Endothelial cell of umbilical vein (primary cell): ENCODE measurements at regions of chr3 and their contacts with region 1.

Region 1: DNA sequence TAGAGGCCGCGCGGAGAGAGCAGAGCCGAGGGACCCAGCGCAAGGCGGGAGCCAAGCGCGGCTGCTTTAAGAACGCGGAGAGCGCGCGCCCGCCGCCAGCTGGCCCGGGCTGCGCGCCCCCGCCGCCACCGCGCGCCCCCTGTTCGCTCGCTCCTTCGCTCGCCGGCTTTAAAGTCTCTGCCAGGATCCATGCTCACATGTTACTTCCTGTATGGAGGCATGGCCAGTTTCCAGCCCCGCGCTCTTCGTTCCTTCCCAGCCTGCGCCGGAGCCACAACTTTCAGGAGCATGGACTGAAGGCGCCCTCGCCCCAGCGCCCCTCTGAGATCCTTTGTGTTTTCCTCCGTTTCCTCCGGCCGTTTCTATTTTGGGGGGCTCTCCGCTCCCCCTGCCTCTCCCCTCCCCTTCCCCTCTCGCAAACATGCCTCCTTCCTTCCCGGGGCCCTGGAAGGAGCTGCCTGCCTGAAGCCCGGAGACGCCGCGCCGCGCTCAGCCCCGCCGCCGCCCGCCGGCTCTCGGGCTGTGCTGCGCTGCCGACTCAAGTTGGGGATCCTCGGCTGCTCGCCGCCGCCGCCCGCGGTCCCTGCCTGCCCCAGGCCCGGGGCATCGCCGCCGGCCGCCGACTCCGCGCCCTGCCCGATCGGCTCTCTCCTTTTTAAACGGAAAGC is at the start of gene PTPRG:
- DNase-seq: peak; percentile 95
- H3K4me3 ChIP-seq: peak within 1 kb of the TSS; percentile 64 to 93 (median 82)
- H3K27ac ChIP-seq: peak within 1 kb of the TSS; percentile 76
- H3K4me1 ChIP-seq: peaks cover 30% of the 10 kb centered on the region
- H3K27me3 ChIP-seq: no peaks in the 10 kb centered on the region
- CTCF ChIP-seq: no peak
- POLR2A ChIP-seq: peak; percentile 92
- total RNA-seq, gene PTPRG: 37.5 and 39.1 TPM in 2 replicates

Region 2: DNA sequence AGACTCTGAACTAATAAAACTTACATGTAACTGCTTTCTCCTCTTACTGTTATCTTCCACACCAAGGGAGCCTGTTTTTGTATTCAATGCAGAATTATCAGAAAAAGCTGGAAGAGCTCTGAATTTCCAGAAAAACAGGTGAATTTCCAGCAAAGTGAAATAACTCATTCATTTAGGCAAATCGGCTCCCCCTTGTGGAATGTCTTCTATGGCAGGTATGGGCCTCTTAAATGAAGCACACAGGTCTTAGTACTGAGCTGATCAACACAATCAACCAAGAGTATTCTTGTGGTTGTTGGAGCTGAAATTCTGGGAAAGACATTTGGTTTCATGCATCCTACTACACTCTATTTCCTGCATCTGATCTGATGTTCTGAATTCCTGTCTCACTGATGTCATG is 31.2 kb before region 1 on chr3:
- CTCF ChIA-PET with region 1: interaction called, 32 read pairs
- POLR2A ChIA-PET with region 1: no interaction called
- dilution Hi-C with region 1: no loop called
- intact Hi-C with region 1: no loop called
- DNase-seq: peak; percentile 51
- H3K4me3 ChIP-seq: no peak overlapping the region
- H3K27ac ChIP-seq: no peak overlapping the region
- H3K4me1 ChIP-seq: no peaks in the 10 kb centered on the region
- H3K27me3 ChIP-seq: peaks cover 4 to 5% of the 10 kb centered on the region in 2 experiments
- CTCF ChIP-seq: peak; percentile 33 to 51
- POLR2A ChIP-seq: no peak

Region 3: DNA sequence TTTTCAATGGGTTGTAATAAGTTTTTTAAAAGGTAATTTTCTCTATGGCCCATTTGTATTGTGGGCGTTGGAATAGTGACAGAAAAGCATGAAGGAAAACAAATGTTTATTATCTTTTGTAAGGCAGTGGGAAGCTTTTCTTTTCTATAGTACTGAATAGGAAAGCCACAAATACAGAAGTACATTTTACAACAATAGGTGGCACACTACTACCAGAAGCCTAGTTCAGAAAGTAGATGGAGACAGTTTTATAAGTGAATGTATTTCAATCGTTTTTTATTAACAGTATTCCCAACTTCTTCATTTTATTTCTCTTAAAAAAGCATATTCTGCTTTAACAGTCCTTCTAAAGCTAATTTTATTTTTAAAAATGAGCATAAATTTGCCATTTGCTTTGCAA is 296.5 kb after region 1 on chr3:
- CTCF ChIA-PET with region 1: interaction called, 21 read pairs
- POLR2A ChIA-PET with region 1: interaction called, 3 read pairs
- dilution Hi-C with region 1: no loop called
- intact Hi-C with region 1: loop called (anchors 2 kb)
- DNase-seq: peak; percentile 57
- H3K4me3 ChIP-seq: no peak overlapping the region
- H3K27ac ChIP-seq: no peak overlapping the region
- H3K4me1 ChIP-seq: no peaks in the 10 kb centered on the region
- H3K27me3 ChIP-seq: no peaks in the 10 kb centered on the region
- CTCF ChIP-seq: peak; percentile 6 to 34
- POLR2A ChIP-seq: no peak

Region 4: DNA sequence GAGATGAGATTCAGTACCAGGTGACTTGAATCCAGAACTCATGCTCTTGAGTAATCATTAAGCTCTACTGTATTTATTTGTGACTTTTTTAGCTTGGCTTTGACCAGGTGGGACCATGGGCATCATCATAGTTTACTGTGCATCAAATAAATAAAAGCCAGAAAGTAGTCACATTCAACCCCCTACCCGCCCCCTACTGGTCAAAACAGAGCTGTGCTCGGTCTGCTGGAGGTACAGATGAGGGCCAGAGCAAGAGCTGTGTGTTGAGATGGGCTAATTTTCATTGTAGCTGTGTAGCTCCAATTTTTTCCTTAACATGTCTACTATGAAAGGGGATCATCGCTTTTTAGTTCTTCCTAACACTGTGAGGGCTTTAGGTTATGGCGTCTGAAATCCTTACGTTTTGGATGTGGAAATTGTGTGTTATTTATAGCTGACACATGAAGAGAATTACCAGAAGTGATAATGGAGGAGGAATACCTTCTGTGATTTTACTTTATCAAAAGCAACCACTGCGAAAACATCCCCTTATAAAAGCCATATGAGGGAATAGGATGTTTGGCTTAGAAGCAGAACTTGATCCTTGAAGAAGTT is 374.9 kb after region 1 on chr3:
- CTCF ChIA-PET with region 1: interaction called, 62 read pairs
- POLR2A ChIA-PET with region 1: no interaction called
- dilution Hi-C with region 1: no loop called
- intact Hi-C with region 1: loop called (anchors 1 kb)
- DNase-seq: peak; percentile 39
- H3K4me3 ChIP-seq: no peak overlapping the region
- H3K27ac ChIP-seq: no peak overlapping the region
- H3K4me1 ChIP-seq: no peaks in the 10 kb centered on the region
- H3K27me3 ChIP-seq: no peaks in the 10 kb centered on the region
- CTCF ChIP-seq: peak; percentile 73 to 83
- POLR2A ChIP-seq: no peak

Region 5: GRCh38 chr3:62131592-62131991 is 570.1 kb after region 1 on chr3:
- CTCF ChIA-PET with region 1: interaction called, 19 read pairs
- POLR2A ChIA-PET with region 1: interaction called, 4 read pairs
- dilution Hi-C with region 1: no loop called
- intact Hi-C with region 1: loop called (anchors 1 kb)
- DNase-seq: peak; percentile 47
- H3K4me3 ChIP-seq: no peak overlapping the region
- H3K27ac ChIP-seq: no peak overlapping the region
- H3K4me1 ChIP-seq: peaks cover 11% of the 10 kb centered on the region
- H3K27me3 ChIP-seq: no peaks in the 10 kb centered on the region
- CTCF ChIP-seq: peak; percentile 17 to 37
- POLR2A ChIP-seq: no peak

Region 6: DNA sequence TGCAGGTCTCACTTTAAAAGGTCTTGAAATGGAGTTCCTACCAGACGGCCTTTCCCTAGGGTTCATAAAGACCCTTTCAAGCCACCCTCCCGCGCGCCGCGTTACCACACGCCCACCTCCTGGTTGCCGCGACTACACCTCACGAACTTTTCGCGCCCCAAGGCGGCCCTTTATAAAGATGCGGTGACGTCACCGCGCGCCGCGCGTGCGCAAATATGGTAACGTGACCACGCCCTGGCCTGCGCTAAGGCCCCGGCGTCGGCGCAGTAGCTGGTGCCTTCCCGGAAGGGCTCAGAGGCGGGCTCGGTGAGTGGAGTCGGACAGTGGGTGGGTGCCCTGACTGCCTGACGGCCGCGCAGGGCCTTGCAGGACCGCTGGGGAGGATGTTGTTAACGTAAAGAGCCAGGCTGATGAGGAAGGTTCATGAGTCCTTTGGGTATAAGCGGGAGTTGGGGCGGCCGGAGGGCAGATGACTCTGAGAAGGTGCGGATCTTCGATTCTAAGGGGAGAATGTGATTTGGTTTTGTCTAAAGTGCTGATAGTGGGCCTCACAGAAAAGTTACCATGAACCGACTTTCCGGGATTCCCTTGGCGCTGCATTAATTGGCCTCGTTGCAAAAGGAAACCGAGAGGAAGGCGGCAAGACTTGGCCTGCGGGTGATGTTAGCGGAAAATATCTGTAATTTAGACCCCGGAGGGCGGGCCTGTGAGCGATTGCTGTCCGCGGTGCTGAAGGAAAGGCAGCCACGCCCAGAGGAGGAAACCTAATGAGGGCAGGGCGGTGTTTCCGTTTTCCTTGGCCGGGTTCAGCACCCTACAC is 757.5 kb after region 1 on chr3:
- CTCF ChIA-PET with region 1: no interaction called
- POLR2A ChIA-PET with region 1: no interaction called
- dilution Hi-C with region 1: no loop called
- intact Hi-C with region 1: loop called (anchors 1 kb)
- DNase-seq: peak; percentile 81
- H3K4me3 ChIP-seq: peak overlapping the region; percentile 71 to 85 (median 81)
- H3K27ac ChIP-seq: peak overlapping the region; percentile 39
- H3K4me1 ChIP-seq: peaks cover 9% of the 10 kb centered on the region
- H3K27me3 ChIP-seq: no peaks in the 10 kb centered on the region
- CTCF ChIP-seq: no peak
- POLR2A ChIP-seq: no peak

Region 7: GRCh38 chr3:62567097-62568021 is 1005.9 kb after region 1 on chr3:
- CTCF ChIA-PET with region 1: no interaction called
- POLR2A ChIA-PET with region 1: no interaction called
- dilution Hi-C with region 1: no loop called
- intact Hi-C with region 1: no loop called
- DNase-seq: peak; percentile 6
- H3K4me3 ChIP-seq: no peak overlapping the region
- H3K27ac ChIP-seq: no peak overlapping the region
- H3K4me1 ChIP-seq: peaks cover 7% of the 10 kb centered on the region
- H3K27me3 ChIP-seq: no peaks in the 10 kb centered on the region
- CTCF ChIP-seq: no peak
- POLR2A ChIP-seq: no peak